ENCODE measurements at regions of chr2 and their contacts with region 1.

Region 1: GRCh38 chr2:24075915-24076848 is at the start of gene SF3B6:
- DNase-seq: peak; percentile 98 to 100 (median 100)
- ATAC-seq: peak; percentile 83
- H3K4me3 ChIP-seq: peak within 1 kb of the TSS; percentile 87 to 100
- H3K4me3 Mint-ChIP-seq: peak within 1 kb of the TSS; percentile 100
- H3K27ac ChIP-seq: peak within 1 kb of the TSS; percentile 91 to 96
- H3K27ac Mint-ChIP-seq: peak within 1 kb of the TSS; percentile 100
- H3K4me1 ChIP-seq: peaks cover 19% of the 10 kb centered on the region
- H3K4me1 Mint-ChIP-seq: peaks cover 36% of the 10 kb centered on the region
- H3K27me3 ChIP-seq: no peaks in the 10 kb centered on the region
- H3K27me3 Mint-ChIP-seq: no peaks in the 10 kb centered on the region
- CTCF ChIP-seq: no peak
- total RNA-seq, gene SF3B6: 69.7 to 78.9 TPM

Region 2: DNA sequence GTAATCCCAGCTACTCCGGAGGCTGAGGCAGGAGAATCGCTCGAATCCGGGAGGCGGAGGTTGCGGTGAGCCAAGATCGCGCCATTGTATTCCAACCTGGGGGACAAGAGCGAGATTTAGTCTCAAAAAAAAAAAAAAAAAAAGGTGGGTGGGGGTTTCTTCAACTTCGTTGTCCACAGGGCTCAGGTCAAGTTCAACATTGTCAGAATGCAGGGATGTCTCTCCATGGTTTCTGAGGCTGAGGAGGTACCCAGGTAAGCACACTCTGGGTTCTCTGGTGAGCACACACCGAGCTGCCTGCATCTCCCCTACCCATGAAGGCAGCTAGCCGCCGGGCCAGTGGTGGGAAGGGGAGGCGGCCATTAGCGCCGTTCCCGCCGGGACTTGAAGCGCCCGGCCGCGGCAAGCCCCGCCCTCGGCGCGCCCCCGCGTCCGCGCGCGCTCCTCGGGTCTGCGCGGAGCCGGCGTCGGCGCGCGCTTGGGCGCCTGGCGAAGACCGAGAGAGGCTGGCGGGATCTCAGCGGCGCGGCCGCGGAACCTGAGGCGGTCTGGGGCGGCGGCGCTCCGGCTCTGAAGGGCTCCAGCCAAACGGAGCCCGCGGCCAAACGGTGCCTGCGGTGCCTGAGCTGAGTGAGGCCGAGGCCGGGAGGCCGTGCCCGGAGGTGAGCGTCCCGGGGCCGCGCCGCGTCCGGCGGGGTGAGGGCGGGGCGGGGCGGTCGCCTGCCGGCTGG is 136.0 kb before region 1 on chr2 and contains the start of gene UBXN2A:
- CTCF ChIA-PET with region 1: no interaction called
- POLR2A ChIA-PET with region 1: no interaction called
- intact Hi-C with region 1: loop called (anchors 1 to 5 kb)
- DNase-seq: peak; percentile 53 to 92 (median 70)
- ATAC-seq: peak; percentile 82
- H3K4me3 ChIP-seq: peak within 1 kb of the TSS; percentile 90 to 97
- H3K4me3 Mint-ChIP-seq: peak within 1 kb of the TSS; percentile 94
- H3K27ac ChIP-seq: peak within 1 kb of the TSS; percentile 59 to 64
- H3K27ac Mint-ChIP-seq: peak within 1 kb of the TSS; percentile 88
- H3K4me1 ChIP-seq: peaks cover 6% of the 10 kb centered on the region
- H3K4me1 Mint-ChIP-seq: peaks cover 33% of the 10 kb centered on the region
- H3K27me3 ChIP-seq: no peaks in the 10 kb centered on the region
- H3K27me3 Mint-ChIP-seq: no peaks in the 10 kb centered on the region
- CTCF ChIP-seq: no peak
- total RNA-seq, gene UBXN2A: 17.7 to 18.0 TPM

Region 3: DNA sequence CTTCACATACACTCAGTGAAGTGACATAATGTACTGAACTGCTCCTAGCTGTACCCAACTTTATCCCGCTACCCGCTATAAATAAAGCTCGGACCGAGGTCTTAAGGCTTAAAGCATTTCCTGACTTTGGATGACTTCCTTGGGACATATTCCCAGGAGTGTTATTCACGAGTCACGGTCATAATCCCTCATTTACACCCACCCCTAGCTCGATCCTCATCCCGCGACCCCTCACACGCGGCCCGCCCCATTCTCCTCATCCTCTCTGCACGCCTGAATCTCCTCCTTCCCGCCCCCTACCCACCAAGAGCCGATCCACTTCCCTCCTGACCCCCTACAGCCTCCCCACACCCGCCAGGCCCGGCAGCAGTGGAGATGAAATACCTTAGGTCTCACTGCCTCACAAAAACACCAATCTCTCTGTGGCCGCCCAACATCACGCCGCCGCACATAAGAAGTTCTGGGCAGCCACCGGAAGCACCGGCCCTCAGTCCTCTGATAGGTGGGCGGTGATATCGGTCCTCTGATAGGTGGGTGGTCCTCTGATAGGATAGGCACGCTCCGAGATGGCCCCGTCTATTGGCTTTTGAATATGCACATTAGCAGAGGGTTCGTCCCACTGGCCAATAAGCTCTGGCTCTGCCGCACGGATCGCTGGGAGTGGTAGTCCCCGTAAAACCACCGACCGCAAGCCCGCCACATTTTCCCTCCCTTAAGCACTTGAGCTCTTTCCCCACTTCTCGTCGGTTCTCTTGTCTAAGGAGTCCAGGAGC is 29.1 kb before region 1 on chr2 and contains the start of gene WDCP:
- CTCF ChIA-PET with region 1: interaction called, 4 read pairs
- POLR2A ChIA-PET with region 1: interaction called, 30 read pairs
- intact Hi-C with region 1: loop called (anchors 1 kb)
- DNase-seq: peak; percentile 81 to 98 (median 92)
- ATAC-seq: peak; percentile 98
- H3K4me3 ChIP-seq: peak within 1 kb of the TSS; percentile 80 to 87
- H3K4me3 Mint-ChIP-seq: peak within 1 kb of the TSS; percentile 93
- H3K27ac ChIP-seq: peak within 1 kb of the TSS; percentile 54 to 56
- H3K27ac Mint-ChIP-seq: peak within 1 kb of the TSS; percentile 90
- H3K4me1 ChIP-seq: peaks cover 21% of the 10 kb centered on the region
- H3K4me1 Mint-ChIP-seq: peaks cover 35% of the 10 kb centered on the region
- H3K27me3 ChIP-seq: no peaks in the 10 kb centered on the region
- H3K27me3 Mint-ChIP-seq: peaks cover 2% of the 10 kb centered on the region
- CTCF ChIP-seq: no peak
- total RNA-seq, gene WDCP: 3.7 to 4.8 TPM

Region 4: GRCh38 chr2:24058564-24059271 is 17.5 kb before region 1 on chr2:
- CTCF ChIA-PET with region 1: no interaction called
- POLR2A ChIA-PET with region 1: no interaction called
- intact Hi-C with region 1: no loop called
- DNase-seq: no peak
- ATAC-seq: no peak
- H3K4me3 ChIP-seq: no peak overlapping the region
- H3K4me3 Mint-ChIP-seq: no peak overlapping the region
- H3K27ac ChIP-seq: no peak overlapping the region
- H3K27ac Mint-ChIP-seq: no peak overlapping the region
- H3K4me1 ChIP-seq: no peaks in the 10 kb centered on the region
- H3K4me1 Mint-ChIP-seq: no peaks in the 10 kb centered on the region
- H3K27me3 ChIP-seq: no peaks in the 10 kb centered on the region
- H3K27me3 Mint-ChIP-seq: no peaks in the 10 kb centered on the region
- CTCF ChIP-seq: no peak

Region 5: GRCh38 chr2:24269265-24269664 is 193.1 kb after region 1 on chr2:
- CTCF ChIA-PET with region 1: no interaction called
- POLR2A ChIA-PET with region 1: no interaction called
- intact Hi-C with region 1: no loop called
- DNase-seq: no peak
- ATAC-seq: no peak
- H3K4me3 ChIP-seq: no peak overlapping the region
- H3K4me3 Mint-ChIP-seq: no peak overlapping the region
- H3K27ac ChIP-seq: no peak overlapping the region
- H3K27ac Mint-ChIP-seq: no peak overlapping the region
- H3K4me1 ChIP-seq: no peaks in the 10 kb centered on the region
- H3K4me1 Mint-ChIP-seq: no peaks in the 10 kb centered on the region
- H3K27me3 ChIP-seq: no peaks in the 10 kb centered on the region
- H3K27me3 Mint-ChIP-seq: no peaks in the 10 kb centered on the region
- CTCF ChIP-seq: no peak

Region 6: DNA sequence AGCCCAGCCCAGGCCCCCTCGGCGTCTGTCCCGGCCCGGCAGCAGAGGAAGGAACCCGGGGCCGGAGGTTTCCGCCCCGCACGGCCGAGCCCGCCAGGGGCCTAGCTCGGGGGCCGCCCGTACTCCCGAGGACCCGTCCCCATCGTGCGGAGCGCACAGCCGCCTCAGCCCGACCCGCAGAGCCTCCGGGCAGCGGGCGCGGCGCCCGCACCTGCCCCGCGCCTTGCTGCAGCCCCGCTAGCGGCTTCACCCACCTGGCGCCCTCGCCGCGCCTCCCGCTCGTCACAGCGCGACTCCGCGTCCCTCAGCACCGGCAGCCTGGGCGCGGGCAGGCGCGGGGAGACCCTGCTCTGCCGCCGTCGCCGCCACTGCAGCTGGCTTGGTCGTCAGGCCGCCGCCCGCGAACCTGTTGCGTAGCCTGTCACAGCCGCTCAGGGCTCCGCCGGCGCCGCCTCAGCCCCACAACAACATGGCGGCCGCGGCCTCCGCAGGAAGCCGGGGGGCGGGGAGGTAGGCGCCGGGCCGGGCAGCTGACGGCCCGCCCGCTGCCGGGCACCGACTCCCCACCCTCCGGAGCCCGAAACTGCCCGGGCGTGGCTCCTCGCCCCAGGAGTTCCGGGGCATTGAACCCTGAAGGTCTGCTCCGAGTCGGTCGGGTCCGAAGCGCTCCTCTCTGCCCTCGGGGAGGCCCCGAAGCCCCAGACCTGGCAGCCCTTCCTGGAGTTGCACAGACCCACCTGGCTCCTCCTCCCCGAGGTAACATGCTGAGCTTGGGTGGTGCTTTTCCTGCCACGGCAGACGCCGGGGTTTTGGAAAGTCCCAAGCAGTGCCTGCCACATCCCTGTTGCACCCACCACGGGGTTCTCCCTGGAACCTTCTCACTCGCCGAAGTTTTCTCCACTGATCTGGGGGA is 284.1 kb after region 1 on chr2 and contains the start of gene ITSN2:
- CTCF ChIA-PET with region 1: no interaction called
- POLR2A ChIA-PET with region 1: no interaction called
- intact Hi-C with region 1: loop called in 1 of 2 experiments (anchors 1 kb)
- DNase-seq: peak; percentile 63 to 95 (median 82)
- ATAC-seq: peak; percentile 83
- H3K4me3 ChIP-seq: peak within 1 kb of the TSS; percentile 79 to 94
- H3K4me3 Mint-ChIP-seq: peak within 1 kb of the TSS; percentile 96
- H3K27ac ChIP-seq: peak within 1 kb of the TSS; percentile 93 to 95
- H3K27ac Mint-ChIP-seq: peak within 1 kb of the TSS; percentile 95
- H3K4me1 ChIP-seq: peaks cover 20% of the 10 kb centered on the region
- H3K4me1 Mint-ChIP-seq: peaks cover 31% of the 10 kb centered on the region
- H3K27me3 ChIP-seq: no peaks in the 10 kb centered on the region
- H3K27me3 Mint-ChIP-seq: no peaks in the 10 kb centered on the region
- CTCF ChIP-seq: no peak
- total RNA-seq, gene ITSN2: 86.0 to 89.3 TPM

Region 7: GRCh38 chr2:24490674-24491625 is 414.8 kb after region 1 on chr2 and contains the start of gene NCOA1:
- CTCF ChIA-PET with region 1: no interaction called
- POLR2A ChIA-PET with region 1: no interaction called
- intact Hi-C with region 1: loop called in 1 of 2 experiments (anchors 10 kb)
- DNase-seq: peak; percentile 77 to 94 (median 89)
- ATAC-seq: peak; percentile 85
- H3K4me3 ChIP-seq: peak within 1 kb of the TSS; percentile 63 to 72
- H3K4me3 Mint-ChIP-seq: peak within 1 kb of the TSS; percentile 89
- H3K27ac ChIP-seq: peak within 1 kb of the TSS; percentile 70 to 93
- H3K27ac Mint-ChIP-seq: peak within 1 kb of the TSS; percentile 94
- H3K4me1 ChIP-seq: peaks cover 37% of the 10 kb centered on the region
- H3K4me1 Mint-ChIP-seq: peaks cover 53% of the 10 kb centered on the region
- H3K27me3 ChIP-seq: no peaks in the 10 kb centered on the region
- H3K27me3 Mint-ChIP-seq: no peaks in the 10 kb centered on the region
- CTCF ChIP-seq: no peak
- total RNA-seq, gene NCOA1: 32.6 to 33.5 TPM

Region 8: GRCh38 chr2:24792874-24793760 is 716.9 kb after region 1 on chr2 and contains the starts of genes CENPO and PTRHD1:
- CTCF ChIA-PET with region 1: no interaction called
- POLR2A ChIA-PET with region 1: no interaction called
- intact Hi-C with region 1: loop called (anchors 2 to 10 kb)
- DNase-seq: peak; percentile 89 to 97 (median 94)
- ATAC-seq: peak; percentile 96
- H3K4me3 ChIP-seq: peak within 1 kb of the TSS; percentile 92 to 97
- H3K4me3 Mint-ChIP-seq: peak within 1 kb of the TSS; percentile 98
- H3K27ac ChIP-seq: peak within 1 kb of the TSS; percentile 90 to 98
- H3K27ac Mint-ChIP-seq: peak within 1 kb of the TSS; percentile 99
- H3K4me1 ChIP-seq: peaks cover 12% of the 10 kb centered on the region
- H3K4me1 Mint-ChIP-seq: peaks cover 18% of the 10 kb centered on the region
- H3K27me3 ChIP-seq: no peaks in the 10 kb centered on the region
- H3K27me3 Mint-ChIP-seq: no peaks in the 10 kb centered on the region
- CTCF ChIP-seq: peak; percentile 68
- total RNA-seq, gene CENPO: 3.4 to 3.6 TPM
- total RNA-seq, gene PTRHD1: 12.2 to 19.0 TPM

Measured in CD8-positive, alpha-beta T cell (primary cell).